ENCODE measurements at regions of chr17 and their contacts with region 1.

Region 1: GRCh38 chr17:50872710-50873424 is 6.7 kb upstream of the TOB1 start:
- DNase-seq: peak; percentile 85
- H3K4me3 Mint-ChIP-seq: no peak overlapping the region
- H3K27ac Mint-ChIP-seq: peak overlapping the region; percentile 53
- H3K4me1 Mint-ChIP-seq: peaks cover 43% of the 10 kb centered on the region
- H3K27me3 Mint-ChIP-seq: no peaks in the 10 kb centered on the region

Region 2: DNA sequence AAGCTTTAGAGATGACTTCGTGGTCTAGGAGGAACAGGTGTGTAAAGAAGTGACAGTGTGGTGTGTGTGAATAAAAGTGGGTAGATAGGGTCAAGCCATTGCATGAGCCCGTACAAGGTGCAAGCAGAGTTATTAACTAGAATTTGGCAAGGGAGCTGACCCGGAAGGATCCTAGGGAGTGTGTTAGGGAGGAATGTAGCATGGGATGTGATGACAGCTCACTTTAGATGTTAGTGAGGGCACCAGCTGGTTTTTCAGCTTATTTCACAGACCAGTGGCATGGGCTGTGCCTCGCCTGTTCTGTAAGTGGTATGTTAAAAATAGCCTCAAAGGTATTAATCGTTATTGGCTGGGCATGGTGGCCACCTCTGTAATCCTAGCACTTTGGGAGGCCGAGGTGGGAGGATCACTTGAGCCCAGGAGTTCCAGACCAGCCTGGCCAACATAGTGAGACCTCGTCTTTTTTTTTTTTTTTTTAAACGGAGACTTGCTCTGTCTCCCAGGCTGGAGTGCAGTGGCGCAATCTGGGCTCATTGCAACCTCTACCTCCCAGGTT is 113.8 kb before region 1 on chr17:
- CTCF ChIA-PET with region 1: no interaction called
- intact Hi-C with region 1: no loop called
- DNase-seq: no peak
- H3K4me3 Mint-ChIP-seq: no peak overlapping the region
- H3K27ac Mint-ChIP-seq: no peak overlapping the region
- H3K4me1 Mint-ChIP-seq: peaks cover 10% of the 10 kb centered on the region
- H3K27me3 Mint-ChIP-seq: no peaks in the 10 kb centered on the region

Region 3: DNA sequence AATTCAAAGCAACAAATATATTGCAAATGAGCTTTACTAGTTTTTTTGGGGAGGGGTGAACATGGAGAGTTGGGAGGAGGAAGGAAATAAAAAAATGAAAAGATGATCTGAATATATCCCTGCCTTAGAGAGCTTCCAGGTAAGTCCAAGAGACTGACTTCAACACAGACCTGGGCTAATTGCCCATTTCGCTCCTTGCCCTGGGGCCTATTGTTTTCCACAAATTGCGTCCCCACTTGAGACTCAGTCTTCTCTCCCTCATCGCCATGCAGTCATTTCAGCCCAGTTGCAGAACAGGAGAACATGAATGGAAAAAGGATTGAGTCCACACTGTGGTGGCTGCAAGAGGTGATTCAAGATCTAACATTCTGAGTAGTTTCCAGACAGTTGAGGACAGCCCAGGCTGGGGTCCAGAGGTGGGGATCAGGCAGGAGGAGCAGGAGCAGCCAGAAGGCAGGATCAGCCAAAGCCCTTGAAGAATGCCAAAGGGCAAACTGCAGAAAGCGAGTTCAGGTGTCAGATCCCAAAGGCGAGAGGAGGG is 14.9 kb after region 1 on chr17:
- CTCF ChIA-PET with region 1: interaction called, 5 read pairs
- intact Hi-C with region 1: loop called (anchors 1 kb)
- DNase-seq: no peak
- H3K4me3 Mint-ChIP-seq: no peak overlapping the region
- H3K27ac Mint-ChIP-seq: no peak overlapping the region
- H3K4me1 Mint-ChIP-seq: peaks cover 20% of the 10 kb centered on the region
- H3K27me3 Mint-ChIP-seq: no peaks in the 10 kb centered on the region

Region 4: DNA sequence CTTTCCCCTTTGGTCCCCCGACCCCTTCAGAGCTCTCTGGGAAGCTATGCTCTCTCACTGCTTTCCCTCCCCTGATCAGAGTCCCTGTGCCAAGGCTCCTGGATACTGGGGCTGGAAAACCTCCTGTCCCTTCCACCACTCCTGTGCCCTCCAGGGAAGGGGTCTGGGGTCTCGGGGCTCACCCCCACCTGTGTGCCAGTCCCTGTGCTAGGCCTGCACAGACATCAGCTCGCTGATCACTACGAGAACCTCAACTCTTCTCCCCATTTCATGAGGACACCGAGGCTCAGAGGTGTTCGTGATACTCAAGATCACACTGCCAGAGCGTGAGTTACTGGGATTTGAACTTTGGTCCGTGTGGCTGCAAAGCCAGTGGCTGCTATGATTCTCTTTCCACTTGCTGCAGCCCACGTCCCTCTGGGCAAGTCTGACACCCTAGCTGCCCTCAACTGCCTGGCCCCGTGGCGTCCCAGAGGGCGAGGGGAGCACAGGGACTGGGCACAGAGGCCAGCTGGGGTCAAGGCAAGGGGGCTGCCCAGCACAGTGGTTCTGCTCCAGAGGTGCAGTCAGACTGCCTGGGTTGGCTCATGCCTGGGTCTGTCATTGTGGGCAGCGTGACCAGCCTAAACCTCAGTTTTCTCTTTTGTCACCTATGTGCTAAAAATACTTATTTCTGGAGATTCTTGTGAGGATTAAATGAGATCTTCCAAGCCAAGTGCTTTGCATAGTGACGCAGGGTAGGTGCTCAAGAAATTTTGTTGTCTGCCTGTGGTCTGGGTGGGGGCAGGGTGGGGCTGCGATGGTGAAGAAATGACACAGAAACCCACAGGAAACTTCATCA is 37.1 kb after region 1 on chr17:
- CTCF ChIA-PET with region 1: interaction called, 5 read pairs
- intact Hi-C with region 1: loop called (anchors 1 kb)
- DNase-seq: peak; percentile 91
- H3K4me3 Mint-ChIP-seq: no peak overlapping the region
- H3K27ac Mint-ChIP-seq: peak overlapping the region; percentile 60
- H3K4me1 Mint-ChIP-seq: peaks cover 67% of the 10 kb centered on the region
- H3K27me3 Mint-ChIP-seq: no peaks in the 10 kb centered on the region

Region 5: GRCh38 chr17:50919321-50920085 is 46.6 kb after region 1 on chr17:
- CTCF ChIA-PET with region 1: no interaction called
- intact Hi-C with region 1: loop called (anchors 1 kb)
- DNase-seq: peak; percentile 91
- H3K4me3 Mint-ChIP-seq: peak overlapping the region; percentile 50
- H3K27ac Mint-ChIP-seq: peak overlapping the region; percentile 86
- H3K4me1 Mint-ChIP-seq: peaks cover 56% of the 10 kb centered on the region
- H3K27me3 Mint-ChIP-seq: no peaks in the 10 kb centered on the region

Region 6: GRCh38 chr17:50967795-50968194 is 94.9 kb after region 1 on chr17:
- CTCF ChIA-PET with region 1: no interaction called
- intact Hi-C with region 1: no loop called
- DNase-seq: no peak
- H3K4me3 Mint-ChIP-seq: no peak overlapping the region
- H3K27ac Mint-ChIP-seq: no peak overlapping the region
- H3K4me1 Mint-ChIP-seq: peaks cover 9% of the 10 kb centered on the region
- H3K27me3 Mint-ChIP-seq: no peaks in the 10 kb centered on the region

Measured in activated naive CD4-positive, alpha-beta T cell treated with anti-CD3 and anti-CD28 coated beads for 36 hours (primary cell).